Prostate gland (tissue), 2 donors: ENCODE measurements at regions of chr12 and their contacts with region 1.

Region 1: GRCh38 chr12:100348657-100349454 is 8.0 kb upstream of the SLC17A8 start:
- DNase-seq: no peak
- H3K4me3 ChIP-seq: no peak overlapping the region
- H3K27ac ChIP-seq: no peak overlapping the region
- H3K4me1 ChIP-seq: no peaks in the 10 kb centered on the region
- H3K27me3 ChIP-seq: no peaks in the 10 kb centered on the region
- CTCF ChIP-seq: peak in 2 of 4 experiments; percentile 32 to 43
- POLR2A ChIP-seq: no peak

Region 2: GRCh38 chr12:100460702-100461101 is 111.8 kb after region 1 on chr12:
- intact Hi-C with region 1: no loop called
- DNase-seq: no peak
- H3K4me3 ChIP-seq: no peak overlapping the region
- H3K27ac ChIP-seq: no peak overlapping the region
- H3K4me1 ChIP-seq: no peaks in the 10 kb centered on the region
- H3K27me3 ChIP-seq: no peaks in the 10 kb centered on the region
- CTCF ChIP-seq: no peak
- POLR2A ChIP-seq: no peak

Region 3: GRCh38 chr12:100733817-100734593 is 385.1 kb after region 1 on chr12:
- intact Hi-C with region 1: loop called (anchors 10 kb)
- DNase-seq: no peak
- H3K4me3 ChIP-seq: no peak overlapping the region
- H3K27ac ChIP-seq: no peak overlapping the region
- H3K4me1 ChIP-seq: no peaks in the 10 kb centered on the region
- H3K27me3 ChIP-seq: no peaks in the 10 kb centered on the region
- CTCF ChIP-seq: peak in 3 of 4 experiments; percentile 22 to 50 (median 44)
- POLR2A ChIP-seq: no peak